ENCODE measurements at regions of chr9 and their contacts with region 1.

Region 1: DNA sequence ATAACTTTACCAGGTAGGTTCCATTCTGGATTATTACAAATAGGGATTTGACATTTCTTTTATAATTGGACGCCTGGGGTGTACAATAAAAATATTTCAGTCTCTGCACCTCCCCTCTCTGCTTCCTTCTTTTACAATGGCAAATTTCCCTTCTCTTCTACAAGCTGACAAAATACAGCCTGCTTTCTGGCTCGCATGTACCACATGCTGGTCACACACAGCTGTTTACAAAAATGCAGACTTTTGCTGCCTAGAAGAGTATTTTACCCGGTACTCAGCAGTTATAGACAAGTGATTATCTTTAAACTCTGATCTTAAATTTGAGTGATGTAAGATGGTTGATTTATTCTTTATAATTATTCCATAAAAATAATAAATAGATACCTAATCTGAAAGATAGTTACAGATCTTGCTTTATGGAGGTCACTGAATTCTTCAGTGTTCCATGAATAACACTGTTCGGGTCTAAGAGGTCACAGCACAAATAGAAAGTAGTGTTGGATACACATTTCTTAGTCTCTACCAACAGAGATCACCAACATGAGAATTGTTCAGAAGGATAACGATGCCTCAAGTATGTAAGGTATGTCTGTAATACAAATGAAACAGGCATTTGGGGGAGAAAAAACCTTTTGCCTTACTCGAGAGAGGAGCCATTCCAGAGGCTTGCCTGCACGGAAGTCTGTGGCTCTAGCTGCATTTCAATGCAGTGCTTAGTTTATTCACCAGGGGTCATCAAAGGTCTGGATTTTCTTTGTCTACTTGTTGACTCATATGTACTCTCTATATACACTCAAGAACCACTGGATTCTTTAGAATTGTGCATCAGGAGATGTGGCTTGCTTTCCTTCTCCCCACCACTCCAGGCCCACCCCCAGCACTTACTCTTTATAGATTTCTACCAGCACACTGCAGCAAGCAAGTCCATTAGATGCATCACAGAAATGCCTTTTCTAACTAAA is 206.6 kb upstream of the RFX3 start:
- DNase-seq: peak; percentile 70
- ATAC-seq: peak; percentile 100
- H3K4me3 ChIP-seq: peak overlapping the region; percentile 10 to 40 (median 34); a peak in 4 of 6 replicates
- H3K27ac ChIP-seq: no peak overlapping the region
- H3K4me1 ChIP-seq: no peaks in the 10 kb centered on the region
- H3K27me3 ChIP-seq: no peaks in the 10 kb centered on the region
- CTCF ChIP-seq: peak; percentile 82
- EP300 ChIP-seq: no peak; a peak in 1 of 4 replicates
- POLR2A ChIP-seq: no peak
- RAD21 ChIP-seq: peak; percentile 85

Region 2: DNA sequence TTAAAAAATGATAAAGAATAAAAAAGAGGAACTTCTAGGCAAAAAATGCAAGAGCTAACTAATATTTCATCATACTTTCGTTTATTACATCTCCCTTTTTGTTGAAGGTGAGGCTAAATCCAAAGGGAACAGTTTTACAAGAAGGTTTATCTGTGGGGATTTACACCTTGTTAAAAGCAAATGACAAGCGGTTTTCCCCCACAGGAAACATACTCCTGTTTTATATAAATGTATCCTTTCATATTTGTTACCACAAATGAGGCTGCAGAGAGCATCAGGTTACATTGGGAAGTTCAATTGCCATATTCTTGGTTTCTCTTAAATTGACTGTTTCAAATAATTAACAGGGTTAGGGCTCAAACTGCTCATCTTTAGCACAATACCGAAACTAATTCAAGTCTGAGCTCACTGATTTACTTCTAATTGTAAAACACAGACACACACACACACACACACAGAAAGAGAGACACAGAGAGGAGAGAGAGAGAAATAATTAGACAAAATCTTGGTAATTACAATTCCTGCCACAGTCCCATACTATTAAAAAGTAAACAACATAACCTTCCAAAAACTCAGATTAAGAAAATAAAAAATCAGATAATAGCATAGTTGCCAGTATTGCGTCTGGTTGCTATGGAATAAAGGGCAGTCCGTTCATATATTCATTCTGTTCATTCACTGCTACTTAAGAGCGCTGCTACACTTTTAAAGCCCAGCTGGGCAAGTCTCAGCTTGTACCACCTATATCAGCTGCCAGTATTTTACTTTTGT is 223.7 kb before region 1 on chr9:
- CTCF ChIA-PET with region 1: no interaction called
- POLR2A ChIA-PET with region 1: no interaction called
- in situ Hi-C with region 1: no loop called
- intact Hi-C with region 1: no loop called
- DNase-seq: no peak
- ATAC-seq: no peak
- H3K4me3 ChIP-seq: no peak overlapping the region
- H3K27ac ChIP-seq: no peak overlapping the region
- H3K4me1 ChIP-seq: peaks cover 19% of the 10 kb centered on the region
- H3K27me3 ChIP-seq: no peaks in the 10 kb centered on the region
- CTCF ChIP-seq: no peak
- EP300 ChIP-seq: no peak
- POLR2A ChIP-seq: no peak
- RAD21 ChIP-seq: no peak

Region 3: GRCh38 chr9:3628239-3628638 is 104.1 kb before region 1 on chr9:
- CTCF ChIA-PET with region 1: no interaction called
- POLR2A ChIA-PET with region 1: no interaction called
- in situ Hi-C with region 1: no loop called
- intact Hi-C with region 1: no loop called
- DNase-seq: no peak
- ATAC-seq: no peak
- H3K4me3 ChIP-seq: no peak overlapping the region
- H3K27ac ChIP-seq: no peak overlapping the region
- H3K4me1 ChIP-seq: no peaks in the 10 kb centered on the region
- H3K27me3 ChIP-seq: no peaks in the 10 kb centered on the region
- CTCF ChIP-seq: no peak
- EP300 ChIP-seq: no peak
- POLR2A ChIP-seq: no peak
- RAD21 ChIP-seq: no peak

Region 4: GRCh38 chr9:3809724-3810123 is 77.4 kb after region 1 on chr9:
- CTCF ChIA-PET with region 1: no interaction called
- POLR2A ChIA-PET with region 1: no interaction called
- in situ Hi-C with region 1: no loop called
- intact Hi-C with region 1: no loop called
- DNase-seq: no peak
- ATAC-seq: no peak
- H3K4me3 ChIP-seq: no peak overlapping the region
- H3K27ac ChIP-seq: no peak overlapping the region
- H3K4me1 ChIP-seq: no peaks in the 10 kb centered on the region
- H3K27me3 ChIP-seq: no peaks in the 10 kb centered on the region
- CTCF ChIP-seq: no peak
- EP300 ChIP-seq: no peak
- POLR2A ChIP-seq: no peak
- RAD21 ChIP-seq: no peak

Region 5: DNA sequence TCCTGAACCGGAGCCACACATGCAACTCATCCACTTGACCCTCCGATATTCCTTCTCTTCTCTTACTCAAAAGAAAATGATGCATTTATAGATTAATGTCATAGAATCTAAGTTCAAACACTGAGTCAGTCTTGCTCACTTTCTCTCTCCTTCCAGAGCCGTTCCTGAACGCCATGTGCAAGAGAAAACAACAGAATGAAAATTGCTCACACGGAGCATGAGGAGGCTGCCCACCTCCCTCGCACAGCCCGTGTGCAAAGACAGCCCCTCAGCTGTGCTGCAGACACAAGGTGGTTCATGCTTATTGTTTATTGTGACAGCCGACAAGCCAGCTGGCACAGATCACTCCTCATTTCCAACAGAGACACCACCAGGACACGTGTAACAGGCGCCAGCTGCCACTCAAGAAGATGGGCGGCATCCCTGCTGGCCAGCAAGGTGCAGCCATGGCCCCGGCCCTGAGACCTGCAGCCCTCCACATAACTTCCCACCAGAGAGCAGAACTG is 276.7 kb after region 1 on chr9:
- CTCF ChIA-PET with region 1: no interaction called
- POLR2A ChIA-PET with region 1: no interaction called
- in situ Hi-C with region 1: no loop called
- intact Hi-C with region 1: loop called (anchors 10 kb)
- DNase-seq: no peak
- ATAC-seq: no peak
- H3K4me3 ChIP-seq: no peak overlapping the region
- H3K27ac ChIP-seq: no peak overlapping the region
- H3K4me1 ChIP-seq: no peaks in the 10 kb centered on the region
- H3K27me3 ChIP-seq: no peaks in the 10 kb centered on the region
- CTCF ChIP-seq: no peak
- EP300 ChIP-seq: no peak
- POLR2A ChIP-seq: no peak
- RAD21 ChIP-seq: no peak

Region 6: GRCh38 chr9:4117835-4118610 is 385.7 kb after region 1 on chr9:
- CTCF ChIA-PET with region 1: interaction called, 12 read pairs
- POLR2A ChIA-PET with region 1: no interaction called
- in situ Hi-C with region 1: loop called (anchors 5 kb)
- intact Hi-C with region 1: loop called (anchors 1 kb)
- DNase-seq: peak; percentile 9
- ATAC-seq: peak; percentile 85
- H3K4me3 ChIP-seq: no peak overlapping the region
- H3K27ac ChIP-seq: no peak overlapping the region
- H3K4me1 ChIP-seq: no peaks in the 10 kb centered on the region
- H3K27me3 ChIP-seq: no peaks in the 10 kb centered on the region
- CTCF ChIP-seq: peak; percentile 89
- EP300 ChIP-seq: no peak
- POLR2A ChIP-seq: no peak
- RAD21 ChIP-seq: peak; percentile 76

Region 7: GRCh38 chr9:4339357-4339756 is 607.0 kb after region 1 on chr9:
- CTCF ChIA-PET with region 1: no interaction called
- POLR2A ChIA-PET with region 1: no interaction called
- in situ Hi-C with region 1: loop called (anchors 10 kb)
- intact Hi-C with region 1: loop called (anchors 1 kb)
- DNase-seq: peak; percentile 66
- ATAC-seq: peak; percentile 78
- H3K4me3 ChIP-seq: no peak overlapping the region
- H3K27ac ChIP-seq: no peak overlapping the region
- H3K4me1 ChIP-seq: 0 out of 2 replicates have a peak, but pooled peaks cover 5% of the 10 kb centered on the region
- H3K27me3 ChIP-seq: no peaks in the 10 kb centered on the region
- CTCF ChIP-seq: peak; percentile 79
- EP300 ChIP-seq: no peak
- POLR2A ChIP-seq: no peak
- RAD21 ChIP-seq: no peak

Region 8: DNA sequence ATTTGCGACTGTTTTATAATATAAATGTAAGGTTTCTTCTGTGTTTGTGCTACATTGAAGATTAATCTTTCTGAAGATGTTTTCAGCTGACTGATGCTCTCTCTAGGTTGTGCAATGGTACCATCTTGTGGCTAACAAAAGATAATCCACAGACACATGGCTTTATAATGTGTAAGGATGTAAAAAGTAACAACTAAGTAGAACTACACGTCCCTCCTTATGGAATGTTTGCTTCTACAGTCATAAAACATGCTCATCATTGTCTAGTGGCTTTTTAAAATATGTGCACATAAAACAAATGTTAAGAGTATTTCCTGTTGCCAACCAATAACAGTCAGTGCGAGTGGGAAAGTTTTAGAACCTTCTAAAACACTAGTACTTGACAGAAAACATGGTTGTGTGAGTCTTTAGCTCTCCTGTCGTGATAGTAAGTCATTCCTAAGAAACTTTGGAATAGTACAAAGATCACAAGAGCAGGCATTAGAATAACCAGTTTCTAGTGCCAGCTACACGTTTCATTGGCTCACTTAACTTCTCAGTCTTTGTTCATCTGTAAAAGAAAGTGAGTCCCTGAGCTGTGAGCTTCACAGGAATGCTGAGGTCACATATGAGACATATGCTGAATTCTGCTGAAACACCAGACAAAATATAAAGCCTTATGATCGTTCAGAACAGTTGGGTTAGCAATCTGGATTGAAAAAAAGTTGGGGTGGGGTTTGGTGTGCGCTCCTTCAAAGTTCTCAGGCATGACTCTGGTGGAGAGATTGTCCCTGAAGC is 643.3 kb after region 1 on chr9:
- CTCF ChIA-PET with region 1: no interaction called
- POLR2A ChIA-PET with region 1: no interaction called
- in situ Hi-C with region 1: no loop called
- intact Hi-C with region 1: loop called (anchors 2 kb)
- DNase-seq: no peak
- ATAC-seq: no peak; the same call in 2 of the 3 replicates
- H3K4me3 ChIP-seq: no peak overlapping the region
- H3K27ac ChIP-seq: no peak overlapping the region
- H3K4me1 ChIP-seq: no peaks in the 10 kb centered on the region
- H3K27me3 ChIP-seq: peaks cover 0 to 3% of the 10 kb centered on the region in 2 experiments; a peak in 1 of 5 replicates
- CTCF ChIP-seq: peak; percentile 43
- EP300 ChIP-seq: no peak
- POLR2A ChIP-seq: no peak
- RAD21 ChIP-seq: no peak